ENCODE measurements at regions of chr12 and their contacts with region 1.

Region 1: DNA sequence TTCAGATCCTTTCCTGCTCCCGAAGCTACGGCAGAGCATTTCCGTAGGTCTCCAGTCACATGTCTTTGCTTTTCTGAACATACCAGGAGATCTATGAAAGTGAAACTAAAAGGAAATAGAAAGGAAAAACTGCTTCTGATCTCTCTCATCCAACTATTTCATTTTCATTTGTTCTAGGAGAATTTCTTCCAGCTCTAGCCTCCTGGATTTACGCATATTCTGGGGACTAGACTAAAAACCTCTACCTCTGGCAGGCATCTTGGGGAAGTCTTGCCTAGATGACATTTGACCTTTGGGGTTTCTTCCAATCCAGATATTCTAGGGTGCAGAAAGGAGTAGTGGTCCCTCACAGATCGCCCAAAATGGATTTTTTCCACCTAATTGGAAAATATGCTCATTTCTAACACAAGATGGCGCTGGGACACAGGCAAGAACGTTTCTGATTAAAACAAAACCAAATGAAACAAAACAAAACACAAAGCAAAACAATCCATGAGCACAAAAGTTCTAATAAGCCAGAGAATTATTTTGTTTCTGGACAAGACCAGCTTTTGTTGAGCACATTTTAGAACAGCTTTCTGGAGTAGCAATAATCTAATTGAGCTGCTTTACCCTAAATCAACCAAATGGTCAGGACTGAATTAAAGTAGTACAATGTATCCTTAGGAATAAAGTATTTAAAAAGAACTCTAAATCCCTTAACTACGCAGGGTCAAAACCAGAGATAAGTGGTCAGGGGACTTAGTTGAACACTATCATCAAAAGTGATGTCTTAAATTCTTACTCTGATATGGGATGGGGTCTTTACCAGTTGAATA is 12.3 kb upstream of the PARP11 start:
- DNase-seq: peak in 7 of 9 donors; percentile 55 to 78 (median 69)
- ATAC-seq: peak; percentile 69
- H3K4me3 ChIP-seq: no peak overlapping the region
- H3K4me3 Mint-ChIP-seq: peak overlapping the region in 7 of 10 donors; percentile 1 to 61 (median 26)
- H3K27ac ChIP-seq: no peak overlapping the region
- H3K27ac Mint-ChIP-seq: peak overlapping the region in 8 of 9 donors; percentile 45 to 93 (median 66)
- H3K4me1 ChIP-seq: no peaks in the 10 kb centered on the region
- H3K4me1 Mint-ChIP-seq: peaks cover 6 to 26% (median 16%) of the 10 kb centered on the region in 7 donors
- H3K27me3 ChIP-seq: no peaks in the 10 kb centered on the region
- H3K27me3 Mint-ChIP-seq: peaks cover 0 to 10% (median 0%) of the 10 kb centered on the region in 5 donors

Region 2: DNA sequence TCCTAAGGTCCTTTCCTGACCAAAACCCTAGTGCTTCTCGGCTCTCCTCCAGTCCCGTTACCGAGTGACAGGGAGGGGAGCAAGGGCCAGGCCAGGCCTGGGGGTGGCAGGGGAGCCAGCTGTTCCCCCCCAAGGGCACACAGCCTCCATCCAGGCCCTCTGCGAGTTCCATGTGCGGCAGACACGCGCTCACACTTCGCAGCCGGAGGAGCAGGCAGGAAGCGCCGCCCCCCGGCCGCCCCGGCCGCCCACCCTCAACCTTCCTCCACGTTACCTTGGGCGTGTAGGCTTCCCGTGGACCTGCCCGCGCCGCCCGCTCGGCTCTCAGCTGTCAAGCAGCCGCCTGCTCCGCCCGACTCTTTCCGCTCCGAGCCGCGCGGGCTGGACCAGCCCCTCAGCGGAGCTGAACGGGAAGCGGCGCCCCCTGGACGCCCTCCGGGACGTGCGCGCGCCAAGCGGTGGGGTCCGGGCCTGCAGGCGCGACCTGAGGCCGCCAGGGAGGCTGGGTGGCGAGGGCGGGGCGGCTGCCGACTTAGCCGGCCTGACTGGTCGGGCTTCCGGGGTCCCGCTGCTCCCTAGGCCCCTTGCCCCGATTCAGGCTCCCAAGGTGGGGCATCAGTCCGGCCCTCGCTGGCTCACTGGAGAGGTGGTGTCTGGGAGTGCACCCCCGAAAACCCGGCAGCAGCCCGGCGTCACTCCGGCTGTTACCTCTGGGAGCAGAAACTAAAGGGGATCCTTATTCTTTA is 132.6 kb before region 1 on chr12 and contains the start of gene CRACR2A:
- CTCF ChIA-PET with region 1: no interaction called
- POLR2A ChIA-PET with region 1: no interaction called
- intact Hi-C with region 1: no loop called
- DNase-seq: peak; percentile 75 to 85 (median 83)
- ATAC-seq: peak; percentile 90
- H3K4me3 ChIP-seq: peak within 1 kb of the TSS; percentile 77
- H3K4me3 Mint-ChIP-seq: peak within 1 kb of the TSS; percentile 89 to 100 (median 94)
- H3K27ac ChIP-seq: peak within 1 kb of the TSS; percentile 93
- H3K27ac Mint-ChIP-seq: peak within 1 kb of the TSS; percentile 93 to 100 (median 97)
- H3K4me1 ChIP-seq: peaks cover 25 to 34% of the 10 kb centered on the region in 2 donors
- H3K4me1 Mint-ChIP-seq: peaks cover 46 to 70% (median 58%) of the 10 kb centered on the region in 7 donors
- H3K27me3 ChIP-seq: no peaks in the 10 kb centered on the region
- H3K27me3 Mint-ChIP-seq: no peaks in the 10 kb centered on the region
- total RNA-seq, gene CRACR2A: 31.4 to 40.3 (median 39.4) TPM

Region 3: GRCh38 chr12:3872800-3873636 is 12.5 kb before region 1 on chr12 and contains the start of gene PARP11:
- CTCF ChIA-PET with region 1: interaction called, 16 read pairs
- POLR2A ChIA-PET with region 1: interaction called, 9 read pairs
- intact Hi-C with region 1: no loop called
- DNase-seq: peak; percentile 93 to 98 (median 96)
- ATAC-seq: peak; percentile 98
- H3K4me3 ChIP-seq: peak within 1 kb of the TSS; percentile 93
- H3K4me3 Mint-ChIP-seq: peak within 1 kb of the TSS; percentile 90 to 99 (median 94)
- H3K27ac ChIP-seq: peak within 1 kb of the TSS; percentile 96
- H3K27ac Mint-ChIP-seq: peak within 1 kb of the TSS; percentile 95 to 99 (median 98)
- H3K4me1 ChIP-seq: peaks cover 23 to 32% of the 10 kb centered on the region in 2 donors
- H3K4me1 Mint-ChIP-seq: peaks cover 31 to 58% (median 55%) of the 10 kb centered on the region in 7 donors
- H3K27me3 ChIP-seq: no peaks in the 10 kb centered on the region
- H3K27me3 Mint-ChIP-seq: peaks cover 0 to 6% (median 0%) of the 10 kb centered on the region in 5 donors
- total RNA-seq, gene PARP11: 21.5 to 37.4 (median 35.1) TPM

Region 4: DNA sequence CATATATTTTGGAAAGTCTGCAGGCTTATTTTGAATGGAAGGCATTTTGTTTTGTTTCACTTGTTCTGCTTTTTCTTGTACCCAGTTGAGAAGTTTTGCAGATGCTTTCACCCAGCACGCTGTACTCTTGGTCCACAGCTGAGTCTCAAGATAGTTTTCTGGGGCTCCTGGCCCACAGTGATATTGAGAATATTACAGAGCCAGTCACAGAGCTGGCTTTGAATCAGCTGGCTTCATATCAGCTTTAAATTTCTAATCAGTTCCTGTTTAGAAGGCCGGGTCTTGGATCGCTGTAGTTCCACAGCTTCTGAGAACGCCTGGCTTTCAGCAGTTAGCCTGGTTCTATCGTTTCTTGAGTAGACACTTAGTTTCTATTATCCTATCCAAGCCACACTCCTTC is 20.2 kb after region 1 on chr12:
- CTCF ChIA-PET with region 1: interaction called, 20 read pairs
- POLR2A ChIA-PET with region 1: interaction called, 6 read pairs
- intact Hi-C with region 1: loop called in 1 of 2 experiments (anchors 1 kb)
- DNase-seq: peak in 1 of 9 donors; percentile 18
- ATAC-seq: peak; percentile 44
- H3K4me3 ChIP-seq: peak overlapping the region; percentile 52
- H3K4me3 Mint-ChIP-seq: peak overlapping the region; percentile 82 to 98 (median 91)
- H3K27ac ChIP-seq: peak overlapping the region; percentile 71
- H3K27ac Mint-ChIP-seq: peak overlapping the region; percentile 81 to 99 (median 97)
- H3K4me1 ChIP-seq: peaks cover 0 to 18% of the 10 kb centered on the region in 2 donors
- H3K4me1 Mint-ChIP-seq: peaks cover 28 to 64% (median 52%) of the 10 kb centered on the region in 7 donors
- H3K27me3 ChIP-seq: no peaks in the 10 kb centered on the region
- H3K27me3 Mint-ChIP-seq: no peaks in the 10 kb centered on the region

Region 5: GRCh38 chr12:3947781-3948180 is 62.3 kb after region 1 on chr12:
- CTCF ChIA-PET with region 1: interaction called, 38 read pairs
- POLR2A ChIA-PET with region 1: interaction called, 12 read pairs
- intact Hi-C with region 1: no loop called
- DNase-seq: peak in 7 of 9 donors; percentile 64 to 90 (median 82)
- ATAC-seq: peak; percentile 86
- H3K4me3 ChIP-seq: peak overlapping the region; percentile 2
- H3K4me3 Mint-ChIP-seq: peak overlapping the region in 9 of 10 donors; percentile 29 to 77 (median 63)
- H3K27ac ChIP-seq: peak overlapping the region; percentile 78
- H3K27ac Mint-ChIP-seq: peak overlapping the region; percentile 91 to 100 (median 98)
- H3K4me1 ChIP-seq: peaks cover 42 to 56% of the 10 kb centered on the region in 2 donors
- H3K4me1 Mint-ChIP-seq: peaks cover 45 to 78% (median 70%) of the 10 kb centered on the region in 7 donors
- H3K27me3 ChIP-seq: no peaks in the 10 kb centered on the region
- H3K27me3 Mint-ChIP-seq: peaks cover 0 to 17% (median 0%) of the 10 kb centered on the region in 5 donors

Region 6: DNA sequence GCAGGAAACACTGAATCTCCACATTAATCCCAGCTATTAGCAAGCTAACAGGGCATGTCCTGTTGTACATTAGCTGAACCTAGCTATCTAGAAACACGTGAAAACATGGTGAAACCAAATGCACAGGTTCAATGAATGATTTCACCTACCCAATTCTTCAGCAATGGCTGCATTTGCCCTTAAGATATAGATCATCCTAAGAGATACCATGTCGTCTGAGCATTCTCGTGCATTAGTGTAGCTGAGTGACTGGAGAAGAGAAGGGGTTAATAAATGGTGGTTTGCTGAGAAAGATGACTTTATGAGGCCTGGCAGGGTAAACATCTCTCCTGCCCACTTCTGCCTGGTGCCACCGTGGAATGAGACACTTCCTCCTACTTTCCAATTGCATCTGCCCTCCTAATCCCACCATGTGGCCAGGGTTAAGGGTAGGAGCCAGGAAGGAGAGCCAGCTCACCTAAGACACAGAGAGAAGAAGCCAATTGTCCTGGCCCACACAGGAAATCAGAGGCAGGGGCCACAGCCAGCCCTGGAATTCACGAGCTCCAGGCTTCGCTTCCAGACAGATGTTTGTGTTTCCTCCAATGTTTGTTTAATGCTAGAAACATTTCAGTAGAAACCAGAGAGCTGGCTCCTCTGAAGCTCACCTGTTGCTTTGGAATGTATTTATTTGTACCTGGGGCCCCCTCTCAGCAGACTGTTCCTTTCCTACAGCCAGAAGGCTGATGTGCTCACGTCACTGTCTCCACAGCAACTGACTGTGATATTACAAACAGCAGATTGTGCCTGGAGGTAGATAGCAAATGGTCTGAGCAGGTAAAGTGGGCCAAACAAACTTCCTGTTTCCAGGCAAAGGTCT is 113.7 kb after region 1 on chr12:
- CTCF ChIA-PET with region 1: interaction called, 127 read pairs
- POLR2A ChIA-PET with region 1: interaction called, 7 read pairs
- intact Hi-C with region 1: loop called (anchors 1 kb)
- DNase-seq: peak in 5 of 9 donors; percentile 15 to 37 (median 21)
- ATAC-seq: peak; percentile 58
- H3K4me3 ChIP-seq: no peak overlapping the region
- H3K4me3 Mint-ChIP-seq: no peak overlapping the region
- H3K27ac ChIP-seq: no peak overlapping the region
- H3K27ac Mint-ChIP-seq: peak overlapping the region in 3 of 9 donors; percentile 18 to 37 (median 36)
- H3K4me1 ChIP-seq: peaks cover 0 to 11% of the 10 kb centered on the region in 2 donors
- H3K4me1 Mint-ChIP-seq: peaks cover 2 to 49% (median 39%) of the 10 kb centered on the region in 7 donors
- H3K27me3 ChIP-seq: no peaks in the 10 kb centered on the region
- H3K27me3 Mint-ChIP-seq: peaks cover 0 to under 1% (median 0%) of the 10 kb centered on the region in 5 donors

Region 7: DNA sequence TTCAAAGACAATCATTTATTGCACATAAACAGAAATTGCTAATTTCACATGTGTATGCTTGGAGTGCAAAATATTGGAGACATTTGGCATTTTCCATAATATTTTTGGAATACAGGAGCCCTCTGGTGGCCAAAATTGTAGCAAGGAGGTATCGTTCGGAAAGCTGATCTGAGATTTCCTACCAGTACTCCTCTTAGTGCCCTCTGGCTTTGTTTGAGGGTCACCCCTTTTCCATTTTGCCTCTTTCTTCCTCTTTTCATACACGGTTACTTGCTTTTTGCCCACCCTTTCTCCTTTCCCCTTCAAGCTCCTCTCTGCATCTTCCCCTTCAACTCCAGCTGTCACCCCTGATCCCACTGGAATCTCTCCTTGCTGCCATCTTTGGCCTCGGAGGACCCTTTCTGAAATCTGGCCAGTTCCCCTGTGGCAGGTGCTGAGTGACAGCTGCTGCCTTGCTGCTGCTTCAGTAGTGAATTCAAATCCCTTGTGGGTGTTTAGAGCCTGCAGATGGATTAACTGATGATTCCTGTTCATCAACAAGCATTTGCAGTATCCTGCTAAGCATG is 152.3 kb after region 1 on chr12:
- CTCF ChIA-PET with region 1: interaction called, 100 read pairs
- POLR2A ChIA-PET with region 1: interaction called, 5 read pairs
- intact Hi-C with region 1: loop called (anchors 1 to 2 kb)
- DNase-seq: peak in 5 of 9 donors; percentile 19 to 31 (median 21)
- ATAC-seq: no peak
- H3K4me3 ChIP-seq: no peak overlapping the region
- H3K4me3 Mint-ChIP-seq: no peak overlapping the region
- H3K27ac ChIP-seq: no peak overlapping the region
- H3K27ac Mint-ChIP-seq: no peak overlapping the region
- H3K4me1 ChIP-seq: no peaks in the 10 kb centered on the region
- H3K4me1 Mint-ChIP-seq: peaks cover 0 to 15% (median 0%) of the 10 kb centered on the region in 7 donors
- H3K27me3 ChIP-seq: no peaks in the 10 kb centered on the region
- H3K27me3 Mint-ChIP-seq: peaks cover 0 to 39% (median 0%) of the 10 kb centered on the region in 5 donors

Region 8: GRCh38 chr12:4148418-4149056 is 263.1 kb after region 1 on chr12:
- CTCF ChIA-PET with region 1: interaction called, 3 read pairs
- POLR2A ChIA-PET with region 1: interaction called, 6 read pairs
- intact Hi-C with region 1: loop called in 1 of 2 experiments (anchors 1 kb)
- DNase-seq: peak in 1 of 9 donors; percentile 37
- ATAC-seq: peak; percentile 80
- H3K4me3 ChIP-seq: no peak overlapping the region
- H3K4me3 Mint-ChIP-seq: no peak overlapping the region
- H3K27ac ChIP-seq: no peak overlapping the region
- H3K27ac Mint-ChIP-seq: peak overlapping the region in 5 of 9 donors; percentile 14 to 70 (median 61)
- H3K4me1 ChIP-seq: peaks cover 13 to 41% of the 10 kb centered on the region in 2 donors
- H3K4me1 Mint-ChIP-seq: peaks cover 20 to 93% (median 34%) of the 10 kb centered on the region in 7 donors
- H3K27me3 ChIP-seq: no peaks in the 10 kb centered on the region
- H3K27me3 Mint-ChIP-seq: no peaks in the 10 kb centered on the region

Measured in naive thymus-derived CD4-positive, alpha-beta T cell (primary cell).